ENCODE measurements at regions of chr15 and their contacts with region 1.

Region 1: DNA sequence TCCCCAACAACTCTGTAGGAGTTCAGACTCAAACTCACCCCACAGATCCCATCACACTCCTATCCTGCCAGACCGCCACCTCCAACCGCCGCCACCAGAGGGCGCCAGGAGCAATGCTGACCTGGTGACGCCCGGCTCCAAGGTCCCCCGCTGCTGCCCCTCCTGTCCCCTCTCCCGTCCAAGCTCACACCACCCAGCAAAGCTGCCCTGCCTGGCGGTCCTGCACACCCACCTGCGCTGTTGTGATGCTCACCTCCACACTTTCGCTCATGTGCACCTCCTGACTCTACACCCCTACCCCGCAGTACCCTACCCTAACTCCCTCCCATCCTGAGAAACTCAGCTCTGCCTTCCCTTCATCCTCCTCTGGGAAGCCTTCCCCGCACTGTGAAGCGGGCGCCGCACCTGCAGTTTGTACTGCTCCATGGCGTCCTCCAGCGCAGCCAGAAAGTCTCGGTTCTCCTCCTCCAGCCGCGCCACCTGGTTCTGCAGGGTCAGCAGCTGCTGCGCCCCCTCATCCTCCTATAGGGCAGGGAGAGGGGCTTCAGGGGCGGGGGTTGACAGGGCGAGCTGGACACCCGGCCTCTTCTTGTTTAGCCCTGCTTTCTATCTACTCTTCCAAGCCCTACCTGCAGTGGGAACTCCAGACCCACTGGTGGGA is 7.9 kb downstream of the KIF7 start:
- DNase-seq: peak; percentile 79 to 91 (median 86)
- ATAC-seq: peak; percentile 82
- H3K4me3 ChIP-seq: no peak overlapping the region
- H3K27ac ChIP-seq: no peak overlapping the region
- H3K4me1 ChIP-seq: peaks cover 10% of the 10 kb centered on the region
- H3K27me3 ChIP-seq: no peaks in the 10 kb centered on the region
- CTCF ChIP-seq: peak; percentile 79 to 92 (median 86)
- POLR2A ChIP-seq: no peak

Region 2: GRCh38 chr15:89690276-89691218 is 43.2 kb after region 1 on chr15 and contains the starts of genes PEX11A and WDR93:
- intact Hi-C with region 1: loop called (anchors 10 kb)
- DNase-seq: peak; percentile 89 to 96 (median 92)
- ATAC-seq: peak; percentile 96
- H3K4me3 ChIP-seq: peak within 1 kb of the TSS; percentile 5 to 54
- H3K27ac ChIP-seq: peak within 1 kb of the TSS; percentile 60 to 76 (median 70)
- H3K4me1 ChIP-seq: peaks cover 25% of the 10 kb centered on the region
- H3K27me3 ChIP-seq: no peaks in the 10 kb centered on the region
- CTCF ChIP-seq: no peak
- POLR2A ChIP-seq: peak; percentile 39 to 76 (median 75)
- total RNA-seq, gene PEX11A: 14.5 to 25.1 TPM
- total RNA-seq, gene WDR93: 0.66 TPM in 1 of 2 donors, not detected in the other

Region 3: DNA sequence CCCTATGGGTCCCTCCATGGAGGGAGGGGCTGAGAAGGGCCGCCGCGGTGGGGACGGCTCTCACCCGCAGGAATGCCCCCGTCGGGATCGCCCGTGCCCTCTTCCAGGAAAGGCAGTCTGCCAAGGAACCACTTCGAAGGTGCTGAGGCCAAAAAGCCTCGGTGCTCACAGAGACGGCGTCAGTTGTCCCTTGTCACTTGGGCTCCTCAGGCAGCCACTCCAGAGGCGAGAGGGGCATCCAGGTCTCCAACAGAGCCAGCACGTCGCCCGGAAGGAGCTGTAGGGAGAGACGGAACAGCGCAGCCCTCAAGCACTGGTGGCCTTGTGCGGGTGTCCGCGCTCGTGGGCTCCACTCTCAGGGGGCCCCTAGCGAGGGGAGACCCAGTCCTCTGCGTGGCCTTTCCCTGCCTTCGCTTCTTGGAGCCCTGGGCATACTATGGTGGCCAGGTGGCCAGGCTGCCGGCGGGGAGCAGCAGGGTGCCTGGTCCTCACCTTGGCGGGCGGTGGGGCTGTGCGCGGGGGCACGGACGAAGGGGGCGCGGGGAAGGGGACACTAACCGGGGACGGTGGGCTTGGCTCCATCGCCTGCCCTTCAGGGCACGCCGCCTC is 102.7 kb after region 1 on chr15:
- intact Hi-C with region 1: loop called (anchors 5 kb)
- DNase-seq: peak; percentile 34 to 53 (median 46)
- ATAC-seq: peak; percentile 21
- H3K4me3 ChIP-seq: peak overlapping the region; percentile 30 to 57
- H3K27ac ChIP-seq: peak overlapping the region; percentile 71 to 85 (median 79)
- H3K4me1 ChIP-seq: peaks cover 28% of the 10 kb centered on the region
- H3K27me3 ChIP-seq: no peaks in the 10 kb centered on the region
- CTCF ChIP-seq: no peak
- POLR2A ChIP-seq: no peak